Endothelial cell of umbilical vein (primary cell): ENCODE measurements at regions of chr5 and their contacts with region 1.

Region 1: DNA sequence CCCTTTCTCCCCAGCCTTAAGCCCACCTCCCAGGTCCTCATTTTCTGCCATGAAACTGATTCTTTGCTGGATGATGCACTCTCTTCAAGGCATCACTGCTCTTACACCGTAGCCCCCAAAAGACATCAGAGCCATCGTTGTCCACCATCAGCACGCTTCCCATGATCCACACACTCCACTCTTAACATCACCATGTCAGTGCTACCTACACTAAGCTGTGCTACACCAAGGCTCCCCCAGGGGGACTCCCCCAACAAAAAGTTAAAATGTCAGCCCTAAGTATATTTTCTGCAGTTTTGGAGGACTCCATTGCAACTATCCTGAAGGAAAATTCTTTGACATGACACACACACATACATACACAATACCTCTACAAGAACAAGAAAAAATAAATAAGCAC is 34.1 kb upstream of the KIF2A start:
- DNase-seq: no peak
- H3K4me3 ChIP-seq: no peak overlapping the region
- H3K27ac ChIP-seq: no peak overlapping the region
- H3K4me1 ChIP-seq: peaks cover 7% of the 10 kb centered on the region
- H3K27me3 ChIP-seq: no peaks in the 10 kb centered on the region
- CTCF ChIP-seq: no peak
- POLR2A ChIP-seq: no peak

Region 2: DNA sequence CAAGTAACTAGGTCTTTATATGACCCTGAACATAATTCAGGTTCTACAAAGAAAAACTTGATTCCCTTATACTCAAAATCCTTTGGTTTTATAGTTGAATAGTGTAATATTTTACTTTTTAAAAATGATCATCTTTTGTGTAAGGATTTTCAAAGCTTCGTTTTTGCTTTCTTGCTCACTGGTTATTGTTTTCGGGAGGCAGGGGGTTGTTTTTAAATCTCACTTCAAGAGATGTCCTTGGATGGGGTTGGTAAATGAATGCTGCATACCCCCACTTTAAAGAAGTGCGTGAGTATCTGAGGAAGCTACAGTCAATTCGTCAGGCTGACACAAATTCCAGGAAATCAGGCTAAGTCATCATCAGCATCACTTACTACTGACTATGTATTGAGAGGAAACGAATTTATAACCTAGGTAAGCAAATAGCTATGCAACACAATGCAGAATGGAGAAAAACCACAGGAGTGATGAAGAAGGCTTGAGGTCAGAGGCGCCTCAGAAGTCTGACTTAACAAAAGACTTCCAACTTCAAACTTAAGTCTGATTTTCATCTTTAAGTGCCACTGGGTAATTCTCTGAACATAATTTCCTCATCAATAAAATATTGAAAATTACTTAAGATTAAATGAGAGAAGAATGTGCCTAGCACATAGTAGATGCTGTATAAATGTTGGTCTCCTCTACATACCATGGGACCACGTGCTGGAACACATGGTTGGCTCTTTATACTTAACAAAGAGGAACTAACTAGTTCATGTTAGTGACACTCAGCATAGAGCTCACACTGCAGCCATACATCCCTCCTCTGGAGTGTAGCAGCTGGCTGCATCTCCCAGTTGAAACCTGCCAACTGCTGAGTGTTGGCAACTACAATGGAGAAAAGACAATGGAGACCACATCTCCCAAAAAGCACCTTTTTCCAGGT is 71.8 kb before region 1 on chr5:
- CTCF ChIA-PET with region 1: no interaction called
- POLR2A ChIA-PET with region 1: no interaction called
- dilution Hi-C with region 1: no loop called
- intact Hi-C with region 1: no loop called
- DNase-seq: no peak
- H3K4me3 ChIP-seq: no peak overlapping the region
- H3K27ac ChIP-seq: no peak overlapping the region
- H3K4me1 ChIP-seq: no peaks in the 10 kb centered on the region
- H3K27me3 ChIP-seq: peaks cover 12 to 14% of the 10 kb centered on the region in 2 experiments
- CTCF ChIP-seq: no peak
- POLR2A ChIP-seq: no peak

Region 3: DNA sequence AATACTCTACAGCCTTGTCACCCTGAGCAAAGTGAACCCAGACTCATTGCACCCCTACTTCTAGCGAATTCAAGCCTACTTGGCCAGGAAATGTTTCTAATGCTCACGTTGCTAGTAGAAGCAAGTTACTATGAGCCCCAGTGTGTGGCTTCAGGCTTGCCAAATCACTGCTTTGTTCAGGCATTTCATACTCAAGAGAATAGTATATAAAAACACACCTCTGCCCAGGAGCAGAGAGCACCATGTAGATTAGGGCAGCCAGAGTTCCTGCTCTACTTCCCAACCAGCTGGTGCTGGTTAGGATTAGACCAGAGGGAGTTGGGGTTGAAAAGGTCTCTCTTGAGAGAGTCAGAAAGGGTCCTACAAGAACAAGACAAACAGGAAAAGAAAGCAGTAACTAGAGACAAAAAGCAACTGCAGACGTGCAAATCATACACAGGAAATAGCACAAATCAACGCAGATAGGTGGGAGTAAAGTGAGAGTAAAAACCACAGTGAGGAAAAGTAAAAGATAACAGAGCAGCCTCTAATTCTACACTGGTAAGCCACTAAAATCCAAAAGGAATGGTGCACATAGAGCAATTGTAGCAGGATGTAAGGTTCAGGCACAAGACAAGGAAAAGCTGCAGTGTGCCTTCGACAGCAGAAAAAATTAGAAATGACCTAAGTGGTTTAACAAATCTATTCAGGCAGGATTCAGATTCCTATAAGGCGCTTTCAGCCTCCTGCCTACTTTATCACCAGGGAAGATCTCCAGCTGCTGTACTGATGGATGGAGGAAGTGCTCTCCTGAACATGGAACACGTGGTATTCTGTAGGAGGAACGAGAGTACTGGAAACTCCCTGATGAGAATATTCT is 15.5 kb before region 1 on chr5:
- CTCF ChIA-PET with region 1: interaction called, 3 read pairs
- POLR2A ChIA-PET with region 1: no interaction called
- dilution Hi-C with region 1: no loop called
- intact Hi-C with region 1: loop called (anchors 1 kb)
- DNase-seq: peak; percentile 57
- H3K4me3 ChIP-seq: no peak overlapping the region
- H3K27ac ChIP-seq: peak overlapping the region; percentile 36
- H3K4me1 ChIP-seq: peaks cover 9% of the 10 kb centered on the region
- H3K27me3 ChIP-seq: peaks cover 2 to 3% of the 10 kb centered on the region in 2 experiments
- CTCF ChIP-seq: no peak
- POLR2A ChIP-seq: no peak

Region 4: DNA sequence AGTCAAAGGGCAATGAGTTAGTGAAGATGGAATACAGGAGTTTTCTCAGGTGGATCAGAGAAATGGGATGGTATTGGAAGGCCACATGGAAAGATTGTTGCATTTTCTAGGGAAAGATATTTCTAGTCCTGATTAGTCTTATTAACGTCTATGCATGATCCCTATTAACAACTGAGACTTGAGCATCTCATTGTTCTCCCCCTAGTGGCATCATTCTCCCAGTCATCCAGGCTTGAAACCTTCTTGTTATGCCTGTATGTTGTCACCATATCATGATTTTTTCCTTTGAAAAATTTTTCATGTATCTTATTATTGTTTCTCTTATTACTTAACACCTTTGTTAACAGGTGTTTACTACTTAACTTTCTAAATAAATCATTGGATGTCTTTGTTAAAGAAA is 68.5 kb after region 1 on chr5:
- CTCF ChIA-PET with region 1: no interaction called
- POLR2A ChIA-PET with region 1: no interaction called
- dilution Hi-C with region 1: no loop called
- intact Hi-C with region 1: loop called (anchors 2 kb)
- DNase-seq: peak; percentile 27
- H3K4me3 ChIP-seq: no peak overlapping the region
- H3K27ac ChIP-seq: no peak overlapping the region
- H3K4me1 ChIP-seq: peaks cover 9% of the 10 kb centered on the region
- H3K27me3 ChIP-seq: no peaks in the 10 kb centered on the region
- CTCF ChIP-seq: no peak
- POLR2A ChIP-seq: no peak

Region 5: GRCh38 chr5:62431735-62432620 is 160.1 kb after region 1 on chr5:
- CTCF ChIA-PET with region 1: no interaction called
- POLR2A ChIA-PET with region 1: no interaction called
- dilution Hi-C with region 1: no loop called
- intact Hi-C with region 1: no loop called
- DNase-seq: no peak
- H3K4me3 ChIP-seq: no peak overlapping the region
- H3K27ac ChIP-seq: no peak overlapping the region
- H3K4me1 ChIP-seq: no peaks in the 10 kb centered on the region
- H3K27me3 ChIP-seq: no peaks in the 10 kb centered on the region
- CTCF ChIP-seq: no peak
- POLR2A ChIP-seq: no peak